Left cardiac atrium (tissue), 4 donors: ENCODE measurements at regions of chr15 and their contacts with region 1.

Region 1: GRCh38 chr15:79380755-79381497 is 51.2 kb upstream of the MINAR1 start:
- DNase-seq: peak; percentile 83
- ATAC-seq: peak; percentile 86 to 89

Region 2: DNA sequence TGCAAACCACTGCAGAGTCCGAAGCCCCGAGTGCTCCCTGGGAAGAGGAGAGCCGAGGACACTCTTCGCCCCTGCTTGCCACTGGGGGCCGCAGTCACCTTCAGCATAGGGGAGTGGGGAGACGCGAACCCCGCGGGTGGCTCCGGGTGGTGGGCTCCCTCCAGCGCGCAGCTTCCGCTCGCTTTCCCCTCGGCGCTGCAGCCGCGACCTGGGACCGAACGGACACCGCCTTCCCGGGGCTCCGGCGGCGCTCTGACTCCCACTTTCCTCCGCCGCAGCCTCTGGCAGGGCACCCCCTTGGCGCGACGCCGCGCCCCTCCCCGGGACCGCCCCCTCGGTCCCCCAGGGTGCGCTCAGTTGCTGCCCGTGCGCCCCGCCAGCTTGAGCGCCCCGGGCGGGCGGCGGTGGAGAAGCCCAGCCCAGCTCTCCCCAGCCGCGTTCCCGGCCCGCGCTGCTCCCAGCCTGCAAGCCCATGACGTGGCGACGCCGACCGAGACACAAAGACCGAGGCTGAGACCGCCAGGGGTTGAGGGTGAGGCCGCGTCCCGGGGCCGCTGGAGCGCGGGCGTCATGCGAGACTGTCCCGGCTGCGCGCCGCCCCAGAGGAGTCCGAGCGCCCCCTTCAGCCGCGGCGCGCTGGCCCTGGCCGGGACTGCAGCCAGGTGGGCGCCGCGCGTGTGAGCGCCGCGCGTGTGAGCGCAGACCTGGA is 50.9 kb after region 1 on chr15 and contains the start of gene MINAR1:
- intact Hi-C with region 1: loop called in 1 of 2 experiments (anchors 5 kb)
- DNase-seq: peak; percentile 36
- ATAC-seq: peak; percentile 82 to 84
- total RNA-seq, gene MINAR1: 0.12 to 0.34 TPM

Region 3: DNA sequence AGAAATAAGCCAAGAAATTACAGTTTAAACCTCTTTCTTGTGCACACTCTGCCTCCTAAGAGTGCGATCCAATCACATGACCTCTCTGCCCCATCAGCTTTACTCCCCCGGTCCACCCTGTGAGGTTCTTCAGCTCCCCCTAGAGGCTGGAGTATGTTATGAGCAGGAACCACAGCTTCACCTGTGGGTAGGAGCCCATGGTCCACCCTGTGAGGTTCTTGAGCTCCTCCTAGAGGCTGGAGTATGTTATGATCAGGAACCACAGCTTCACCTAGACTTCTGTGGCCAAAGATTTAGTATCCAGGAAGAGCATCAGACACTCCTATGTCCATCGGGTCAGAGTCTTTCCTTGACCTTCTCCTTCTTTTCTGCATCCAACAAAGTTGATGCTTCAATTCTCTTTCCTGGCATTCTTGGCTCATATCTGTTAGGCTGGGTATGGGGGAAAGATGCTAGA is 215.2 kb after region 1 on chr15:
- intact Hi-C with region 1: loop called (anchors 5 to 10 kb)
- DNase-seq: peak; percentile 29
- ATAC-seq: peak; percentile 77 to 82

Region 4: DNA sequence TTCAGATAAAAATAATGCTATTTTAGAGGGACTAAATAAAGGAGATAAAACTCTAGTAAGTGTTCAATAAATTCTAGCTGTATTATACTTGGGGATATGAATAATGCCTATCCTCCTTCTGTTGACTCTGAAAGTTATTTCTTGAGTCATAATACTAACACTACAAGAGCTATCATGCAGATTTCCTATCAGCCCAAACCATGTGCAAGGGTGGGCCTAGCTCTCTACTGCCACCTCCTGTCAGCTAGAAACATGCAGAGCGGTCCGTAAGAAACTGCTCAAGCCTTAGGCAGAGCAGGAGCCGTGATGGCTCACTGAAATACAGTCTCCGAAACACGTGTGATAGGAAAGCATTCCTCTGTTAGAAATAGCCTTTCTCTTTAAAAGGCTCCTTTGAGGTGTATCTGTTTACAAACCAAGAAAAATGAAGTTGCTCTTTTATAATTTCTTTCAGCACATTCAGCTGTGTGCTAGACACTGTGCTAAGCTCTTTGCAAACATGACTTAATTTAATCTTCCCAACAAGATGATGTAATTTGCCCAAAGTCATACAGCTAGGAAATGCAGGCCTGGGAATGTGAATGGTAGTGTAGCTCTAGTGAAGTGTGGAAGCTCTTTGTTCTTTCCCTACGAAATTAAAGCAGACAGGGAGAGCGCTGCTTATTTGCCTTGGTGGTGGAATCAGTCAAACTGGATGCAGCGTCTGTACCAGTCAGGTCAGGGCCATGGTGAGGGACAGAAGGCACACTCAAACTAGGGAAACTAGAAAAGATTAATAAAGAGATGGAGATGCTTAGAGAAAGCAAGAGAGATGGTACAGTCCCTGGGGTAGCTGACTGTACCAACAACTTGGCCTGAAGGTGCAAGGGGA is 472.8 kb after region 1 on chr15:
- intact Hi-C with region 1: loop called (anchors 2 to 10 kb)
- DNase-seq: peak; percentile 47
- ATAC-seq: peak; percentile 89 to 99

Region 5: GRCh38 chr15:79989682-79990081 is 608.8 kb after region 1 on chr15:
- intact Hi-C with region 1: loop called in 1 of 2 experiments (anchors 5 kb)
- DNase-seq: no peak
- ATAC-seq: peak in 1 of 2 donors; percentile 61